Naive thymus-derived CD8-positive, alpha-beta T cell (primary cell): ENCODE measurements at regions of chr1 and their contacts with region 1.

Region 1: DNA sequence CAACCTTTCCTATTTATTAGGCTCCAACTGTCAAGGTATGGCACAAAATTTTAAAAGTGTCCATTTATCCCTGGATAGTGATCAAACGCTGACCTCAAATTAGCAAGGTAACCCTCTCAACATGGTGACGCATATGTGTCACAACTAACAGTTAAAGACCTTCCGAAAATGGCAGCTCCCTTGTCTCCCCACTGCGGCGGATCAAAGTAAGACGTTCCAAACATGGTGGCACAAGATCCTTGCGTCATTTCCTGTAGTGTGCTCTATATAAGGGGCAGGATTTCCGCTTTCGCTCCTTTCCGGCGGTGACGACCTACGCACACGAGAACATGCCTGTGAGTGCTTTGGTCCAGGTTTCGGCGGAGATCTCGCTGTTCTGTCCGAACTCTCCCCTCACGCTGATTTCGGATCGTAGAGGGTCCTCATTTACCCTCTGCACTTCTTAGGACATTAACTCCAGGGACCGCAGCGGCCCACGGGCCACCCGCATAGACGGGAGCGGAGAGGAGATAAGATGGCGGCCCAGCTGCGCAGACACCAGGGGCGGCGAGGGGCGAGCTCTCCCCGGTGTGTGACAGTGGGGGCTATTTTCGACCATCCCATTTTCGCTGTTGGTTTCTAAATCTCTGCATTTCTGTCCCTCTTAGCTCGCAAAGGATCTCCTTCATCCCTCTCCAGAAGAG is at the start of gene RPS27:
- DNase-seq: peak; percentile 59 to 97 (median 92)
- ATAC-seq: peak; percentile 82 to 86
- H3K4me3 Mint-ChIP-seq: peak within 1 kb of the TSS; percentile 90 to 100 (median 98)
- H3K27ac Mint-ChIP-seq: peak within 1 kb of the TSS; percentile 99 to 100 (median 100)
- H3K4me1 Mint-ChIP-seq: peaks cover 35 to 63% (median 58%) of the 10 kb centered on the region in 4 donors
- H3K27me3 Mint-ChIP-seq: peaks cover 0 to 2% (median 0%) of the 10 kb centered on the region in 5 donors
- polyA plus RNA-seq, gene RPS27: 23,491 to 26,660 (median 26,449) TPM

Region 2: DNA sequence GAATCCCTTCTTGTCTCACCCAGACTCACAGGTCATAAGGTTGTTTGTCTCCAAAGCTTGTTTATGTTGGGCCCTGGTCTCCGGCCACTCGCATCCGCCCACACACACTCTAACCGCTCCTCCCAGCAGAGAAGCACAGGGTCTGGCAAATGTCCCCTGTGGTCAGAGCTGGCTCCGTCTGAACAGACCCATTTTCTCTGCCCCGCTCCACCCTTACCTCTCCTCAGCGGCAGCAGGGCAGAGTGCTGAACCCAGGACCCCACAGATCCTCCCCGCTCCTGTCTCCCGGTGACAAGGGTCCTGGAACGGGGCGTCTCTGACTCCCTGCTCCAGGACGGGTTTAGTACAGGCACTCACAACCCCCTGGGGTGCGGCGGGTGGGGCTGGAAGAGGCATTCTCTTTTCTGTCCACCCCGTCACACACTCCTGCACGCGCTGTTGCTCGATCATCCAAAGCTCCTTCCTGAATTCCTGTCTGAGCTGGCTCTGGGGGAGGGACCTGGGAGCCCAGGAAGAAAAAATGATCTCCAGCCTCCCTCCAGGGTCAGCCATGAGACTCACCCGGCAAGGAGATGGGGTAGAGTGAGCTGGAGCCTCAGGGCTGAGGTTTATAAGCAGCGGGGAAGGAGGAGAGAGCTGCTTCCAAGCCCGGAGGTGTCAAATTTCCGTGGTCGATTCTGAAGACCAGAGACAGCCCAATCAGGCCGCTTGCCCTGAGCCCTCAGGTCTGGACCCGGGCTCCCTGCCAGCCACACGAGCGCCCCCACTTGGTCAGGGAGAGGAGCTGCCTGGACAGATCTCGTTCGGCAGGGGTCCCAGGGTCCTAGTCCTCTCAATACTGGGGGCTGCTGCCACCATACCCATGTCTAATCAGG is 363.4 kb before region 1 on chr1 and contains the start of gene S100A13:
- POLR2A ChIA-PET with region 1: no interaction called
- DNase-seq: no peak
- ATAC-seq: no peak
- H3K4me3 Mint-ChIP-seq: peak within 1 kb of the TSS in 2 of 10 donors; percentile 36 to 48
- H3K27ac Mint-ChIP-seq: peak within 1 kb of the TSS in 4 of 10 donors; percentile 6 to 44 (median 14)
- H3K4me1 Mint-ChIP-seq: peaks cover 7 to 16% (median 11%) of the 10 kb centered on the region in 4 donors
- H3K27me3 Mint-ChIP-seq: peaks cover 0 to 17% (median 11%) of the 10 kb centered on the region in 5 donors
- polyA plus RNA-seq, gene S100A13: 0.94 to 1.9 (median 1.1) TPM

Region 3: GRCh38 chr1:153670859-153671627 is 319.6 kb before region 1 on chr1 and contains the start of gene ILF2:
- POLR2A ChIA-PET with region 1: interaction called, 11 read pairs
- DNase-seq: peak; percentile 88 to 100 (median 97)
- ATAC-seq: peak; percentile 90 to 91
- H3K4me3 Mint-ChIP-seq: no peak within 1 kb of the TSS
- H3K27ac Mint-ChIP-seq: peak within 1 kb of the TSS in 2 of 10 donors; percentile 78 to 81
- H3K4me1 Mint-ChIP-seq: peaks cover 6 to 32% (median 22%) of the 10 kb centered on the region in 4 donors
- H3K27me3 Mint-ChIP-seq: peaks cover 0 to under 1% (median 0%) of the 10 kb centered on the region in 5 donors
- polyA plus RNA-seq, gene ILF2: 115 to 140 (median 121) TPM

Region 4: GRCh38 chr1:153796791-153797659 is 193.6 kb before region 1 on chr1:
- POLR2A ChIA-PET with region 1: interaction called, 18 read pairs
- DNase-seq: peak; percentile 70 to 92 (median 81)
- ATAC-seq: peak; percentile 92 to 93
- H3K4me3 Mint-ChIP-seq: peak overlapping the region in 4 of 10 donors; percentile 3 to 40 (median 32)
- H3K27ac Mint-ChIP-seq: peak overlapping the region in 9 of 10 donors; percentile 13 to 83 (median 65)
- H3K4me1 Mint-ChIP-seq: peaks cover 13 to 32% (median 26%) of the 10 kb centered on the region in 4 donors
- H3K27me3 Mint-ChIP-seq: no peaks in the 10 kb centered on the region

Region 5: DNA sequence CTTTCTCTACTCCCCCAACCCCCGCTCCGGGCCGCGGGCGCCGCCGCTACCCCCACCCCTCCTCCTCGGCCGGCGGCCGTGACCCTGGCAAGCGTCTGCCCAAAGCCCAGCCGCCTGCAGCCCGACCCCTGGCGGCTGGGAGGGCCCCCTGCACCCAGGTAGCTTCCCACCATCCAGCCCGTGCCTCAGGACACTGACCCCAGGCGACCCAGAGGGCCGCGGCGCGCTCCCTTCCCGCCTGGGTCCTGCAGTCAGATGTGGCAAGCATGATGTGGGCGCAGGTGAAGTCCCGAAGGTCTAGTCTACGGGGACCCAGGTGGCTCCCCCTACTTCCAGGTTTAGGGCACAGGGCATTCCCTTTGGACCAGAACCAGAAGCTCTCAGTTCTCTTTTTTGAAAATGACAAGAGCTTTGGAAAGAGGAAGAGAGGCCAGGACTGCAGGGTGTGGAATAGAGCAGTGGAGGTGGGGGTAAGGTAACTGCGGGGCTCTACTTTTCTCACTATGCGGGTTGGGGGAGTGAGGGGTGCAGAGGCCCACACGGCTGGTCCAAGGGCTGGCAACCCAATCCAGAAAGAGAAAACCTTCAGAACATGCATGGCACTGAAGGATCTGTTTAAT is 43.9 kb before region 1 on chr1 and contains the start of gene DENND4B:
- POLR2A ChIA-PET with region 1: interaction called, 49 read pairs
- DNase-seq: peak; percentile 46 to 85 (median 70)
- ATAC-seq: peak; percentile 57 to 60
- H3K4me3 Mint-ChIP-seq: peak within 1 kb of the TSS; percentile 91 to 98 (median 94)
- H3K27ac Mint-ChIP-seq: peak within 1 kb of the TSS; percentile 92 to 98 (median 95)
- H3K4me1 Mint-ChIP-seq: peaks cover 32 to 63% (median 47%) of the 10 kb centered on the region in 4 donors
- H3K27me3 Mint-ChIP-seq: no peaks in the 10 kb centered on the region
- polyA plus RNA-seq, gene DENND4B: 12.0 to 21.2 (median 19.0) TPM

Region 6: DNA sequence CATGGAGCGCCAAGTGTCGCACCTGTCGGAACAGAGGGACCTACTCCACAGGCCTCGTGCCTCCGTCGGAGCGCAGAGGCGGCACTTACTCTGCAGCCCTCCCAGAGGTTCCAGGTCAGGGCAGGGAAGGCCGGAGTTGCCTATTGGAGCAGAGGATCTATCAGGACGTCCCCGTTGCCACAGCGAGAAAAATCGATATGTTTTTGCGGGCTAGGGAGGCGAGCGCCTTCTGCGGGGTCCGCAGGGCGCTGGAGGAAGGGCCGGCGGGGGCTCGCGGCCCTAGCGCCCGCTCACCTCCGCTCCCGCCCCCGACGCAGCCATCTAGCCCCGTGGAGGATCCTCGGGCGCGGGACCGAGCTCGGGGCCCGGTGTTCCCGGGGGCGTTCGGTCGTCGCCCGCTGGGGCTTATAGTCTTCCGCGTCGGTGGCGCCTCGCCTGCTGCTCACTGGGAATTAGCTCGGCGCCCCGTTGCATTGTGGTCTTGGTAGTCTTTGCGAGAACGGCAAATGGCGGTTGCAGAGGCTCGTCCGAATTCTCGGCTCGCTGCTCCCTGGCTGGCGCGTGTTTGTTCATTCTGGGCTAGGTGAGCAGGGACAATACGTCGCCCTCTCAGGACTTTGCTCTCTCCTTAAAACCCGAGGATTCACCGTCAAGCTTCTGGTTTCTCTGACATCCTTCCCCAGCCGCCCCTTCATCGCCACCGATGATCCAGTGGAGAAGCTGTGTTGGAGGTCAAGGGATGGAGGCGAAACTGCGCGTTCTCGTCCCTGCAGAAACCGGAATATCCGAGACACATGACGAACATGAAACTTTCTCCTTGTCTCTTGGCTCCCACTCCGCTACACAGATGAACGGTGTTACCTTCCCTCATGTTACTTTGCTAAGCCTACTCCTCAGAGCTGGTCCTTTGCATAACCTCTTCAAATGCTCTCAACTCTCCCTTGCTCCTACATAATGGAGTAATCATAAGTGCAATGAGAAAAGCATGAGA is 13.1 kb before region 1 on chr1 and contains the start of gene JTB:
- POLR2A ChIA-PET with region 1: interaction called, 87 read pairs
- DNase-seq: peak; percentile 73 to 92 (median 78)
- ATAC-seq: peak; percentile 96
- H3K4me3 Mint-ChIP-seq: peak within 1 kb of the TSS; percentile 91 to 99 (median 97)
- H3K27ac Mint-ChIP-seq: peak within 1 kb of the TSS; percentile 87 to 99 (median 96)
- H3K4me1 Mint-ChIP-seq: peaks cover 11 to 42% (median 37%) of the 10 kb centered on the region in 4 donors
- H3K27me3 Mint-ChIP-seq: no peaks in the 10 kb centered on the region
- polyA plus RNA-seq, gene JTB: 302 to 384 (median 322) TPM

Region 7: GRCh38 chr1:154183045-154183915 is 192.7 kb after region 1 on chr1:
- POLR2A ChIA-PET with region 1: interaction called, 31 read pairs
- DNase-seq: peak; percentile 87 to 96 (median 94)
- ATAC-seq: peak; percentile 80 to 81
- H3K4me3 Mint-ChIP-seq: peak overlapping the region; percentile 97 to 100 (median 100)
- H3K27ac Mint-ChIP-seq: peak overlapping the region; percentile 95 to 100 (median 99)
- H3K4me1 Mint-ChIP-seq: peaks cover 36 to 51% (median 46%) of the 10 kb centered on the region in 4 donors
- H3K27me3 Mint-ChIP-seq: peaks cover 0 to 6% (median 0%) of the 10 kb centered on the region in 5 donors